HepG2 (cell line): ENCODE measurements at regions of chr20 and their contacts with region 1.

Region 1: GRCh38 chr20:41738604-41739206 is 120.5 kb upstream of the CHD6 start:
- DNase-seq: peak; percentile 49
- ATAC-seq: peak; percentile 93
- H3K4me3 ChIP-seq: no peak overlapping the region
- H3K27ac ChIP-seq: no peak overlapping the region
- H3K4me1 ChIP-seq: no peaks in the 10 kb centered on the region
- H3K27me3 ChIP-seq: no peaks in the 10 kb centered on the region
- CTCF ChIP-seq: peak; percentile 87
- EP300 ChIP-seq: no peak
- POLR2A ChIP-seq: no peak
- RAD21 ChIP-seq: peak; percentile 77

Region 2: DNA sequence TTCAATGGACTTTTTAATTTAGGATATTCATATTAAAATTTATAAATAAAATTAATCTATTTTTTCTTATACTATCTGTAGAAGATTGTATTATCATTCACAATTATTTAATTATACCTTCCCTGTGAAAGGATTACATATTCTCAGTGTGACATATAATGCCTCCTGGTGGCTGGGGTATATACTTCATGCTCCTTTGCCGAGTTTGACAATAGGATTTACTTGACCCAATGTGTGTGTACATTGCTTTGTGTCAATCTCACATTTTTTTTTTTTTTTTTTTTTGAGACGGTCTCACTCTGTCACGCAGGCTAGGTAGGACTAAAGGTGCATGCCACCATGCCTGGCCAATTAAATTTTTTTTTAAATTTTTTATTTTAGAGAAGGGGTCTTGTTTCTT is 109.5 kb after region 1 on chr20:
- CTCF ChIA-PET with region 1: interaction called, 8 read pairs
- POLR2A ChIA-PET with region 1: no interaction called
- in situ Hi-C with region 1: no loop called
- intact Hi-C with region 1: loop called (anchors 2 kb)
- DNase-seq: peak; percentile 29
- ATAC-seq: peak; percentile 47; the same call in 1 of the 3 replicates
- H3K4me3 ChIP-seq: no peak overlapping the region
- H3K27ac ChIP-seq: no peak overlapping the region
- H3K4me1 ChIP-seq: no peaks in the 10 kb centered on the region
- H3K27me3 ChIP-seq: no peaks in the 10 kb centered on the region
- CTCF ChIP-seq: peak; percentile 39
- EP300 ChIP-seq: no peak
- POLR2A ChIP-seq: no peak
- RAD21 ChIP-seq: no peak

Region 3: GRCh38 chr20:42530822-42531448 is 792.2 kb after region 1 on chr20:
- CTCF ChIA-PET with region 1: interaction called, 6 read pairs
- POLR2A ChIA-PET with region 1: no interaction called
- in situ Hi-C with region 1: loop called (anchors 25 kb)
- intact Hi-C with region 1: loop called (anchors 10 kb)
- DNase-seq: peak; percentile 35
- ATAC-seq: peak; percentile 72
- H3K4me3 ChIP-seq: no peak overlapping the region
- H3K27ac ChIP-seq: no peak overlapping the region
- H3K4me1 ChIP-seq: no peaks in the 10 kb centered on the region
- H3K27me3 ChIP-seq: no peaks in the 10 kb centered on the region
- CTCF ChIP-seq: peak; percentile 74
- EP300 ChIP-seq: no peak
- POLR2A ChIP-seq: no peak
- RAD21 ChIP-seq: no peak

Region 4: GRCh38 chr20:43187476-43188233 is 1449.0 kb after region 1 on chr20:
- CTCF ChIA-PET with region 1: interaction called, 20 read pairs
- POLR2A ChIA-PET with region 1: no interaction called
- in situ Hi-C with region 1: loop called (anchors 5 kb)
- intact Hi-C with region 1: no loop called
- DNase-seq: peak; percentile 57
- ATAC-seq: peak; percentile 63
- H3K4me3 ChIP-seq: no peak overlapping the region
- H3K27ac ChIP-seq: no peak overlapping the region
- H3K4me1 ChIP-seq: no peaks in the 10 kb centered on the region
- H3K27me3 ChIP-seq: peaks cover 9 to 53% of the 10 kb centered on the region in 2 experiments; a peak in 3 of 5 replicates
- CTCF ChIP-seq: peak; percentile 91
- EP300 ChIP-seq: no peak
- POLR2A ChIP-seq: no peak
- RAD21 ChIP-seq: peak; percentile 88

Region 5: GRCh38 chr20:43408848-43409576 is 1670.3 kb after region 1 on chr20:
- CTCF ChIA-PET with region 1: interaction called, 18 read pairs
- POLR2A ChIA-PET with region 1: no interaction called
- in situ Hi-C with region 1: loop called (anchors 5 kb)
- intact Hi-C with region 1: loop called (anchors 1 kb)
- DNase-seq: peak; percentile 50
- ATAC-seq: peak; percentile 88
- H3K4me3 ChIP-seq: no peak overlapping the region
- H3K27ac ChIP-seq: no peak overlapping the region
- H3K4me1 ChIP-seq: no peaks in the 10 kb centered on the region
- H3K27me3 ChIP-seq: no peaks in the 10 kb centered on the region; a peak in 1 of 5 replicates
- CTCF ChIP-seq: peak; percentile 92
- EP300 ChIP-seq: no peak
- POLR2A ChIP-seq: no peak
- RAD21 ChIP-seq: peak; percentile 75